CD4-positive, alpha-beta T cell (primary cell): ENCODE measurements at regions of chr7 and their contacts with region 1.

Region 1: DNA sequence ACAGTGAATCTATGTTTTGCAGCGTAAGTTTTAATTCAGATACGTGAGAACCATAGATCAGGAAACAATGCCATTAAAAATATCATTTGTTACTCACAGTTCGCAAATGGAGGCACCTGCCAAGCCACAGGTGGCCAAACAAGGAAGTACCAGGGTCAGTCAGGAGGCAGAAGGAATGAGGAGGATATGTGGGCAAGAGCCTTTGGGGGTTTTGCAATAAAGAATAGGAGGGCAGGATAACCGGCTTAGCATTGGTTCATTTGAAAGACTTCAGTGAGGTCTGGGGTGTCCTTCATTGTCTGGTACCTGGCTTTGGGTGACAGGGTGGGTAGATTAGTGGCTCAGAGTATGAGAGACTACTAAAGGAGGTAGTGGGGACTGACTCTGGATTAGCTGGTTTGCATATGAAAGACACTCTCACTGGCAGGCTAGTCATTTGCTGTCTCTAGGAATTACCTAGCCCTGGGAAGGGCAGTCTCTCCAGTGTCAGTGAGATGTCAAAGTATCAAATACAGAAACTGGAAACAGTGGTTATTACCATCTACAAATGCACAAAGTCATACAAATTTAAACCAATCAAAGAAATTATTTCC is 132.2 kb upstream of the CAV2 start:
- DNase-seq: no peak
- ATAC-seq: no peak
- H3K4me3 ChIP-seq: no peak overlapping the region
- H3K4me3 Mint-ChIP-seq: no peak overlapping the region
- H3K27ac ChIP-seq: no peak overlapping the region
- H3K27ac Mint-ChIP-seq: no peak overlapping the region
- H3K4me1 ChIP-seq: no peaks in the 10 kb centered on the region
- H3K4me1 Mint-ChIP-seq: no peaks in the 10 kb centered on the region
- H3K27me3 ChIP-seq: peaks cover 0 to 5% of the 10 kb centered on the region in 2 experiments
- H3K27me3 Mint-ChIP-seq: peaks cover 20% of the 10 kb centered on the region
- CTCF ChIP-seq: no peak

Region 2: DNA sequence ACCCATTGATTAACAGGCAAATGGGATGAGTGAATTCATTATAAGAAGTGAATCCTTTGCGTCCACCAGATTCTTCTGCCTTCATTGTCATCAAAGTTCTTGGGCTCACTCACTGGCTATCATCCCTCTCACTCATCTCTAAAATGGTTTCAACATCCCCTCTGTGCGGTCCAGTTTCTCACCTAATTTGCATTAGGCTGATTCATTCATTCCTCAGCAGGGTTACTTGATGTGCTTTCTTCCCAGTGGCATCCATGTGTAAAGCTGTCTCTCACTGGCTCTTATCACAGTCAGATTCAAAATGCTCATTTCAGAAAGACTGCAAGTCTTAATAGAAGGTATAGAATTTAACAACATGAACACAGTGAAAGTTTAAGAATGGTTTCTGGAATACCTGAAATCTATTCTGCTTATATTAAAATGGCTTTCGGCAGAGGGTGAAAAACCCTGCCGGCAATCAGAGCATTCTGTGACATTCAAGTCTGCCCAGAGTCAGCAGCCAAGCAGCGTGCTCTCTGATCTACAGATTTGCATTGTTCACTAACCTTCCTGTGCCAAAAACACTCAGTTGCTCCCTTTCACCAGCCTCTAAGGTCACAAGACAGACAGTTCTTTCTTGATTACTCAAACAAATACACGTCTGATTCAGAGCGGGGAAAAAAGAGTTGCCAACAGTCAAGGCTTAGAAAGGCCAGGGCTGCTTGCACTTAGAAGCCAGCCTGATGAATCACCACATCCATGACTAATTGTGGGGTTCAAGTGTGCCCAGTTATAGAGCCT is 50.3 kb before region 1 on chr7:
- CTCF ChIA-PET with region 1: no interaction called
- POLR2A ChIA-PET with region 1: no interaction called
- intact Hi-C with region 1: loop called in 1 of 2 experiments (anchors 5 kb)
- DNase-seq: no peak
- ATAC-seq: no peak
- H3K4me3 ChIP-seq: no peak overlapping the region
- H3K4me3 Mint-ChIP-seq: no peak overlapping the region
- H3K27ac ChIP-seq: no peak overlapping the region
- H3K27ac Mint-ChIP-seq: no peak overlapping the region
- H3K4me1 ChIP-seq: no peaks in the 10 kb centered on the region
- H3K4me1 Mint-ChIP-seq: no peaks in the 10 kb centered on the region
- H3K27me3 ChIP-seq: no peaks in the 10 kb centered on the region
- H3K27me3 Mint-ChIP-seq: peaks cover 18% of the 10 kb centered on the region
- CTCF ChIP-seq: no peak

Region 3: DNA sequence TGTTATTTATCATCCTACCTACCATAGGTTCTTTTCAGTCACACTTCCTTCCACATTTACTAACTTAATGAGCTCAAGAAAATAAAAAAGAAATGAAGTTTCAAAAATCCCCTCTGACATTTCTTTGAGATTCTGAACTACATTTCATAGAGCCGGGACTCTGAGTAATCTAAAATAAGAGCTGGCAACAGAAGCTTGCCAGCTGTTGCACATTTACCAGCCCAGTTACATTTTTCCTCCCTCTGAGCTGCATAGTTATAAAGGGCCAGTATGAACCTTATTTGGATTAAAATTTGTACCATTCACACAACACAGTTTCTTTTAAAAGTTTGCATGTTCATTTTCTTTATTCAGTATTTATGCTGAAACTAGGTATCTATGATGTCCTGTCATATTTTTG is 12.7 kb after region 1 on chr7:
- CTCF ChIA-PET with region 1: no interaction called
- POLR2A ChIA-PET with region 1: no interaction called
- intact Hi-C with region 1: no loop called
- DNase-seq: no peak
- ATAC-seq: no peak
- H3K4me3 ChIP-seq: no peak overlapping the region
- H3K4me3 Mint-ChIP-seq: no peak overlapping the region
- H3K27ac ChIP-seq: no peak overlapping the region
- H3K27ac Mint-ChIP-seq: no peak overlapping the region
- H3K4me1 ChIP-seq: no peaks in the 10 kb centered on the region
- H3K4me1 Mint-ChIP-seq: no peaks in the 10 kb centered on the region
- H3K27me3 ChIP-seq: peaks cover 0 to under 1% of the 10 kb centered on the region in 2 experiments
- H3K27me3 Mint-ChIP-seq: no peaks in the 10 kb centered on the region
- CTCF ChIP-seq: no peak

Region 4: GRCh38 chr7:116525913-116526861 is 158.9 kb after region 1 on chr7:
- CTCF ChIA-PET with region 1: no interaction called
- POLR2A ChIA-PET with region 1: no interaction called
- intact Hi-C with region 1: no loop called
- DNase-seq: peak; percentile 27 to 80 (median 50)
- ATAC-seq: peak; percentile 92
- H3K4me3 ChIP-seq: peak overlapping the region; percentile 52
- H3K4me3 Mint-ChIP-seq: peak overlapping the region; percentile 83
- H3K27ac ChIP-seq: no peak overlapping the region
- H3K27ac Mint-ChIP-seq: no peak overlapping the region
- H3K4me1 ChIP-seq: peaks cover 24% of the 10 kb centered on the region
- H3K4me1 Mint-ChIP-seq: peaks cover 20% of the 10 kb centered on the region
- H3K27me3 ChIP-seq: peaks cover 49 to 57% of the 10 kb centered on the region in 2 experiments
- H3K27me3 Mint-ChIP-seq: peaks cover 91% of the 10 kb centered on the region
- CTCF ChIP-seq: peak; percentile 61

Region 5: GRCh38 chr7:116647290-116647689 is 280.0 kb after region 1 on chr7:
- CTCF ChIA-PET with region 1: no interaction called
- POLR2A ChIA-PET with region 1: no interaction called
- intact Hi-C with region 1: no loop called
- DNase-seq: no peak
- ATAC-seq: no peak
- H3K4me3 ChIP-seq: no peak overlapping the region
- H3K4me3 Mint-ChIP-seq: no peak overlapping the region
- H3K27ac ChIP-seq: no peak overlapping the region
- H3K27ac Mint-ChIP-seq: no peak overlapping the region
- H3K4me1 ChIP-seq: no peaks in the 10 kb centered on the region
- H3K4me1 Mint-ChIP-seq: no peaks in the 10 kb centered on the region
- H3K27me3 ChIP-seq: no peaks in the 10 kb centered on the region
- H3K27me3 Mint-ChIP-seq: peaks cover 27% of the 10 kb centered on the region
- CTCF ChIP-seq: no peak